Ovary (tissue), 10 donors: ENCODE measurements at regions of chr15 and their contacts with region 1.

Region 1: DNA sequence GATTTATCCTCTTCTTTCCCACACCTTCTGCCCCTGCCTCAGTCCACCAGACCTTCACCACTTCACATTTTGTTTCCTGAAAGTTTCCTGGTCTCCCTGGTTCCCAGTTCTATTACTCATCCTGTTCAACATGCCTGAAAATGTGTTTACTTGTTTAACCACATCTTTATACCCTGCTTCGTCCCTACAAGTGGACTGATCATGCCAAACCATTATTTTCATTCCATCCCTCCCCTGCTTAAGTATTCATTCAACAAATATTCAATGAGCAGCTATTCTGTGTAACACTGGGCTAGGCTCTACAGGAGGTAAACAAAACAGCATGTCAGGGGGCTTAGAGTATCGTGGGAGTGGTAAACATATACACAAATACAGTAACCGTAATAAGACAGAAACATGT is 5.5 kb downstream of the MYO5A start:
- DNase-seq: no peak
- H3K4me3 ChIP-seq: no peak overlapping the region
- H3K27ac ChIP-seq: no peak overlapping the region
- H3K4me1 ChIP-seq: no peaks in the 10 kb centered on the region
- H3K27me3 ChIP-seq: no peaks in the 10 kb centered on the region
- CTCF ChIP-seq: no peak
- EP300 ChIP-seq: no peak
- POLR2A ChIP-seq: no peak

Region 2: DNA sequence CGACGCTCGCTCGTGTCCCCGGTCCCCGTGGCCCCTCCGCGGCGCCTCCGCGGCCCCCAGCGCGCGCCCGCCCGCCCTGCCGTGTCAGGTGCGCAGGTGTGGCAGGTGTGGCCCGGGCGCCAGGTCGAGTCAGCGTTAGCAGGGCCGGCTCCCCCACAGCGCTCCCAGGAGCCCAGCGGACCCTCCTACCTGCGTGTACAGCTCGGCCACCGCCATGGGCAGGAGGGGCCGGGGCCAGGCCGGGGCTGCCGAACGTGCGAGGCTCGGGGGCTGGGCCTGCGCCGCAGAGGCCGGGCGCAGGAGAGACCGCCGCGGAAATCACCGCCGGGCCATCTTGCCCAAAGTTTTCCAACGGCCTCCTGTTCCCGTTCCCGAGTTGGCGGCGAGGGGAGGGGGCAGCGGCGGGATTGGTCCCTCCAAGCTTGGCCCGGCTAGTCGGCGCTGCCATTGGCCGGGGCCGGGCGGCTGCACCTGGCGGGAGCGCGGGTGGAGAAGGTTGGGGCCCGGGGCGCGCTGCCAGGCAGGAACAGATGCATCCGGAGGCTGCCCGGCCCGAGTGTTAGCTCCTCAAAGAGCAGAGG is 227.7 kb before region 1 on chr15 and contains the start of gene MYO5C:
- intact Hi-C with region 1: no loop called
- DNase-seq: peak in 4 of 5 donors; percentile 50 to 67 (median 53)
- H3K4me3 ChIP-seq: peak within 1 kb of the TSS; percentile 35
- H3K27ac ChIP-seq: no peak within 1 kb of the TSS
- H3K4me1 ChIP-seq: peaks cover 3% of the 10 kb centered on the region
- H3K27me3 ChIP-seq: peaks cover 2% of the 10 kb centered on the region
- CTCF ChIP-seq: no peak
- EP300 ChIP-seq: no peak
- POLR2A ChIP-seq: no peak
- total RNA-seq, gene MYO5C: 1.1 to 23.6 (median 10.8) TPM

Region 3: DNA sequence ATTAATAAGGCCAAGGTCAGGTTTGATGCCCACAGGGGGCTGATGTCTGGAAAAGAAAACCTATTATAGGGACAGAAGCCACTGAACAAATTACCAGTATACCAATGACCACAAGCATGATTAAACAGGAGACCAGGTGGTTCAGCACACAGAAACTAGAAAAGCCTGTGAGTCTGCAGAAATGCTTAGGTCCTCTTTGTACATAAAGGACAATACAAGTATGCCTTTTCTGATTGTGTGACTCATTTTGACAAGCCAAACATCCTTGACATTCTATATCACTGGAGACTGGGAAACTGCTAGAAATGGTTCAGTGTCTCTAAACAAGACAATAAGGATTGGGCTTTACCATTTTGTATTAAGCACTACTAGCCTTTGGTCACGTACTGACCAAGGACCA is 114.4 kb before region 1 on chr15:
- intact Hi-C with region 1: loop called in 1 of 4 experiments (anchors 5 kb)
- DNase-seq: no peak
- H3K4me3 ChIP-seq: no peak overlapping the region
- H3K27ac ChIP-seq: no peak overlapping the region
- H3K4me1 ChIP-seq: no peaks in the 10 kb centered on the region
- H3K27me3 ChIP-seq: no peaks in the 10 kb centered on the region
- CTCF ChIP-seq: no peak
- EP300 ChIP-seq: no peak
- POLR2A ChIP-seq: no peak